ENCODE measurements at regions of chr7 and their contacts with region 1.

Region 1: DNA sequence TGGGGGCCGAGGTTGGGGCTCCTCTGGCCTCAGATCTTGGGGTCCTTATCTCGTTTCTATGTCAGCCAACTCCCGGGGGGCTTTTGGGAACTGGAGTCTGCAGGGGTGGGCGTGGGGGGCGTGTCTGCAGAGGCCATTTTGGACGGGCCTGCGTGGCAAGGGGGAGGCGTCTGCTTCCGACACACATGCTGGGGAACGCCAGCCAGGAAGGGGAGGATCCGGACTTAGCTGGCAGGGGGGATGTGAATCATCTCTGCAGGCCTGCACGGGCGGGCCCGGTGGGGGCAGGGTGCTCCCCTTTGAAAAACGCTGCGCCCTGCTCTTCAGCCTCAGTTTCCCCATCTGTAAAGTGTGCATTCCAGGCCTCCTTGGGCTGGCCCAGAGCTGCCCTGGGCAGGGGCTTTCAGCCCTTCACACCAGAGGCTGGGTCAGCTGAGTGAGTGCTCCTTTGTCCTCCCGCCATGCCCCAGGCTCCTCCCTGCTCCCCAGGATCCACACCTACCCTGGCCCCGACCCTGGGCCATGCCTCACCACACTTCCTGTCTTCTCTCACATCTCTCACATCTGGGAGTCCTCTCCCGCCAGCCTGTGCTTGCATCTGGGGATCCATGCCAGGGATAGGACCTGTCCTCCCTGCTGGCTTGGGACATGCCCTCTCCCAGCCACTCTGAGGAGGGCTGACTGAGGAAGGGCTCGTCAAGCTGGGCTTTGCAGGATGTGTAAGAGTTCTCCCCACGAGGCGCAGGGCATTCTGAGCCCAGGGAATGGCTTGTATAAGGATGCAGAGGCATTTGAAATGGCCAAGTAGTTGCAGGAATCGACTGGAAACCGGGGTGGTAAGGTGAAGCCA is 172.6 kb upstream of the TNRC18 start:
- DNase-seq: peak; percentile 86
- ATAC-seq: peak; percentile 58

Region 2: DNA sequence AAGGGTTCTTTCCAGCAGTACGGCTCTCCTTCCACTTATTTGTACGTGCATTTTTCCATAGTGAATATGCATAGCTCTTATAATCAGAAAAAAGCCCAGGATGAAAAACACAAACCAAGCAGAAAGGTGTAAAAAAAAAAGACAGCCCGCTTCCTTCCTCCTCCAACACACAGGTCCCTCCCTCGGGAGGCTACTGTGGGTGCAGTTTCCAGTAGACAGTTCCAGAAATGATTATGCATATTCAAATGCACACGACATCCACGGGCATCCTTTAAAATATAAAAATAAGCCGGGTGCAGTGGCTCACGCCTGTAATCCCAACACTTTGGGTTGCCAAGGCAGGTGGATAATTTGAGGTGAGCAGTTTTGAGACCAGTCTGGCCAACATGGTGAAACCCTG is 232.5 kb before region 1 on chr7:
- intact Hi-C with region 1: no loop called
- DNase-seq: no peak
- ATAC-seq: no peak

Region 3: DNA sequence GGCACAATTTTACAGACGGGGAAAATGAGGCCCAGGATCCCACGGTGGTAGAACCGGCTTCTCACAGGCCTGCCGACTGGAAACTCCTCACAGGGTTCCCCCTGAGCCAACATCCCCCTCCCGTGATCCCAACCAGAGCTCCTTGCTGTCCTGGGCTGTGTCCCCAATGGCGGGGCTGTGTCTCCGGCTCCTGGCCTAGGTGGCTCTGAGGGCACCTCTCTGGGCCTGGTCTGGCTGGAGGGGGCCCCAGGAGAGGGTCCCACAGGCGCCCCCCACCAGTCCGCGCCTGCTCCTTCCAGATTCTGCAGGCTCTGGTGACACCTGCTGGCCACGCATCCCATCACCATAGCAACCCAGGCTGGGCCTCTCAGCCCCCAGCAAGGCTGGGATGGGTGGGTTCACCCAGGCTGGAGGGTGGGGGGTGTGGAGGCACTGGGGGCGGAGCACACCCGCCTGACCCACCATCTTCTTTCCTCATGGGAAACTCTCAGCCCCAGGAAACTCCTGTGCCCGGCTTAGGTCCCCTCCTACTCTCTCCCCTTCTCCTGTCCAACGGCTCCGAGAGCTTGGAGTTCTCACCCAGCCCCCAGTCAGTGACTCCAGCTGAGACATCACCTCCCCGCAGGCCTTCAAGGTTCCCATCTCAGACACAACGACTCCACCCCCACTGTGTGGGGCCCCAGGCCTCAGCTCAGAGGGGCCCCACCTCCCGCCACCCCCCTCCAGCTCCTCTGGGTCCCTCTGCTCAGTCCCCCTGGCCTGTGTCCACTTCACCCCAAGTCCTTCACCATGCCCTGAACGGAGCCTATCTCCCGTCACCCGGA is 145.5 kb before region 1 on chr7:
- intact Hi-C with region 1: no loop called
- DNase-seq: peak; percentile 76
- ATAC-seq: peak; percentile 66

Region 4: DNA sequence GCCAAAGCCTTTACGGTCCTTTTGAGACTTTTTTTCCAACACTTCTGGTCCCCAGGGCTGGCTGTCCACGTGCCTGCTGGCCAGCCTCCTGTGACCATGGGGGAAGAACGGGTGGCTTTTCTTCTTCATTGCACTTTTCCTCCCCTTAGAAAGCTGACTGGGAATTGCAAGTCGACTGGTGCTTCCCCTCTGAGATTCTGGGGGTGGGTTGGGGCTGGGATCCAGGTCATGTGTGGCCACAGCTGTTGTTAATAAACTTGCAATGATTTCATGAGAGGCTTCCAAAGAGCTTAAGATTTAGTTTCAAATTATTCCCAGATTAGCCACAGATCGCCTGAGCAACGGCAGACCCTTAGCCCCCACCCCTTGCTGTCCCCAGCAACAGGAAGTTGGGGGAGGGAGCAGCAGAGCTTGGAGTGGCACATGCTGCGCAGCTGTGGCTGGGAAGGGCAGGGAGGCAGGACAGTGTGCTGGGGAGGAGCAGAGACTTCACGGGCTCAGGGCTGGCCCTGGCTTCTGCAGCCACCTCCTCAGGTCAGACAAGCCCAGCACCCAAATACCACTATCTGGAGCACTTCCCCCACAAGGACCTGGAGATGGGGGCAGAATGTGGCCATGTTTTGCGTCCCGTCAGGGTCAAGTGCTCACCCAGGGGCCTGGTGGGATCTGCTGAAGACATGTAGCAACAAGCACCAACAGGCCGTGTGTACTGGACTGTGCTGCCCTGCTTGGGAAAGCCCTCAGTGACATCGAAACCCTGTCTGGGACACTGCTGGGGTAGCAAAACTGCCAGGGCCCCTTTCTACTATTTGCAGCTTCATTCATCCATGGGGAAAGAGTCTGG is 38.1 kb after region 1 on chr7:
- intact Hi-C with region 1: loop called (anchors 5 kb)
- DNase-seq: peak; percentile 84
- ATAC-seq: peak; percentile 88

Region 5: GRCh38 chr7:5646852-5647251 is 50.6 kb after region 1 on chr7:
- intact Hi-C with region 1: no loop called
- DNase-seq: no peak
- ATAC-seq: no peak

Measured in Right ventricle myocardium inferior (tissue), 1 donor.